ENCODE measurements at regions of chr4 and their contacts with region 1.

Region 1: GRCh38 chr4:140153718-140154571 is at the start of gene MAML3:
- DNase-seq: peak; percentile 79 to 86 (median 84)
- H3K4me3 ChIP-seq: peak within 1 kb of the TSS; percentile 60 to 91 (median 87)
- H3K4me3 Mint-ChIP-seq: peak within 1 kb of the TSS; percentile 97
- H3K27ac ChIP-seq: peak within 1 kb of the TSS; percentile 88 to 92
- H3K27ac Mint-ChIP-seq: peak within 1 kb of the TSS; percentile 92 to 97 (median 94)
- H3K4me1 ChIP-seq: peaks cover 40 to 50% of the 10 kb centered on the region in 2 donors
- H3K4me1 Mint-ChIP-seq: peaks cover 38% of the 10 kb centered on the region
- H3K27me3 ChIP-seq: no peaks in the 10 kb centered on the region
- H3K27me3 Mint-ChIP-seq: peaks cover 0 to 1% (median 0%) of the 10 kb centered on the region in 3 donors
- CTCF ChIP-seq: no peak
- polyA plus RNA-seq, gene MAML3: 1.5 to 6.5 (median 2.3) TPM

Region 2: GRCh38 chr4:139501927-139502899 is 651.7 kb before region 1 on chr4:
- intact Hi-C with region 1: no loop called
- DNase-seq: no peak
- H3K4me3 ChIP-seq: no peak overlapping the region
- H3K4me3 Mint-ChIP-seq: peak overlapping the region in 1 of 2 donors; percentile 6
- H3K27ac ChIP-seq: no peak overlapping the region
- H3K27ac Mint-ChIP-seq: peak overlapping the region in 5 of 7 donors; percentile 9 to 53 (median 28)
- H3K4me1 ChIP-seq: peaks cover 5% of the 10 kb centered on the region in 2 donors
- H3K4me1 Mint-ChIP-seq: peaks cover 29% of the 10 kb centered on the region
- H3K27me3 ChIP-seq: no peaks in the 10 kb centered on the region
- H3K27me3 Mint-ChIP-seq: peaks cover 0 to 1% (median 0%) of the 10 kb centered on the region in 3 donors
- CTCF ChIP-seq: no peak

Region 3: GRCh38 chr4:139734875-139735380 is 419.0 kb before region 1 on chr4:
- intact Hi-C with region 1: loop called (anchors 5 kb)
- DNase-seq: peak; percentile 74 to 97 (median 78)
- H3K4me3 ChIP-seq: peak overlapping the region; percentile 53 to 81 (median 73)
- H3K4me3 Mint-ChIP-seq: peak overlapping the region; percentile 85 to 92
- H3K27ac ChIP-seq: peak overlapping the region; percentile 34 to 79
- H3K27ac Mint-ChIP-seq: peak overlapping the region; percentile 48 to 94 (median 90)
- H3K4me1 ChIP-seq: peaks cover 40 to 57% of the 10 kb centered on the region in 2 donors
- H3K4me1 Mint-ChIP-seq: peaks cover 51% of the 10 kb centered on the region
- H3K27me3 ChIP-seq: no peaks in the 10 kb centered on the region
- H3K27me3 Mint-ChIP-seq: peaks cover 0 to 1% (median 1%) of the 10 kb centered on the region in 3 donors
- CTCF ChIP-seq: peak; percentile 95

Region 4: DNA sequence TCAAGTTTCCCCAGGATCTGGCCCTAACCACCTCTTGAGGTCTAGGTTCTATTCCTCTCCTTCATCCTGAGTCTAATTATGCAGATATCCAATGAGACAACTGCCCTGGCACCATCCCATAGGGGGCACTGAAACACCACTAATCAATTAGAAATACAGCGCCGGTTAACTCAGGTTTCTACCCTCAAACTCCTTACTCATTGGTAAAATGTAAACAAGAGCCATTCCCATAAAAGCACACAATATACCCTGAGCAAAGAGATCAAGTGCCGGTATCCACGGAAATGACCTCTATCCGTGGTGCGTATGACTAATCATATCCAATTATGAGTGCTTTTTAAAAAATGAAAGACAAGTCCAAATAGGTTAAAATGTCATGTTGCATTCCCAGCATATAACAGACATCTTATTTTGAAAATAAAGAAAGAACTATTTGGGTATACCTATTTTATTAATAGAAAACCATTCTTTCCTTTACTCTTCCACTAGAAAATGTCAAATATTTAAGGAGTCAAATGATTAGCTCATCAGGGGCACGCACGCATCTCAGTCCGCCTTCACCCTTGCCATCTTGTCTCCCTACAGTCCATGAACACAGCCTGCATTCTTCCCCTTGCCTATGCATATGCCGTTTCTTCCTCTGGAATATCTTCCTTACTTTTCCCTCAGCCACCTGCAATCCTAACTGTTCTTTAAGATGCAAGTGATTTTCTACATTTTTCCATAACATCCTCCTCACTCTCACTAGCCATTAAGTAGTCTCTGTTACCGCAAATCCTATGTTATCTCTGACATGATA is 141.1 kb before region 1 on chr4:
- intact Hi-C with region 1: loop called in 1 of 2 experiments (anchors 5 kb)
- DNase-seq: peak; percentile 37 to 66 (median 63)
- H3K4me3 ChIP-seq: no peak overlapping the region
- H3K4me3 Mint-ChIP-seq: peak overlapping the region in 1 of 2 donors; percentile 35
- H3K27ac ChIP-seq: no peak overlapping the region
- H3K27ac Mint-ChIP-seq: peak overlapping the region in 1 of 7 donors; percentile 39
- H3K4me1 ChIP-seq: peaks cover 6 to 8% of the 10 kb centered on the region in 2 donors
- H3K4me1 Mint-ChIP-seq: peaks cover 9% of the 10 kb centered on the region
- H3K27me3 ChIP-seq: no peaks in the 10 kb centered on the region
- H3K27me3 Mint-ChIP-seq: no peaks in the 10 kb centered on the region
- CTCF ChIP-seq: peak; percentile 72

Region 5: GRCh38 chr4:140052050-140052449 is 101.9 kb before region 1 on chr4:
- intact Hi-C with region 1: loop called in 1 of 2 experiments (anchors 5 kb)
- DNase-seq: peak in 1 of 3 donors; percentile 49
- H3K4me3 ChIP-seq: no peak overlapping the region
- H3K4me3 Mint-ChIP-seq: no peak overlapping the region
- H3K27ac ChIP-seq: no peak overlapping the region
- H3K27ac Mint-ChIP-seq: no peak overlapping the region
- H3K4me1 ChIP-seq: peaks cover 49 to 70% of the 10 kb centered on the region in 2 donors
- H3K4me1 Mint-ChIP-seq: peaks cover 66% of the 10 kb centered on the region
- H3K27me3 ChIP-seq: no peaks in the 10 kb centered on the region
- H3K27me3 Mint-ChIP-seq: no peaks in the 10 kb centered on the region
- CTCF ChIP-seq: peak; percentile 53

Region 6: GRCh38 chr4:140090215-140090731 is 63.7 kb before region 1 on chr4:
- intact Hi-C with region 1: loop called (anchors 2 to 5 kb)
- DNase-seq: no peak
- H3K4me3 ChIP-seq: no peak overlapping the region
- H3K4me3 Mint-ChIP-seq: peak overlapping the region in 1 of 2 donors; percentile 6
- H3K27ac ChIP-seq: peak overlapping the region in 1 of 2 donors; percentile 82
- H3K27ac Mint-ChIP-seq: peak overlapping the region; percentile 85 to 97 (median 93)
- H3K4me1 ChIP-seq: peaks cover 62 to 67% of the 10 kb centered on the region in 2 donors
- H3K4me1 Mint-ChIP-seq: peaks cover 61% of the 10 kb centered on the region
- H3K27me3 ChIP-seq: no peaks in the 10 kb centered on the region
- H3K27me3 Mint-ChIP-seq: no peaks in the 10 kb centered on the region
- CTCF ChIP-seq: no peak

Region 7: DNA sequence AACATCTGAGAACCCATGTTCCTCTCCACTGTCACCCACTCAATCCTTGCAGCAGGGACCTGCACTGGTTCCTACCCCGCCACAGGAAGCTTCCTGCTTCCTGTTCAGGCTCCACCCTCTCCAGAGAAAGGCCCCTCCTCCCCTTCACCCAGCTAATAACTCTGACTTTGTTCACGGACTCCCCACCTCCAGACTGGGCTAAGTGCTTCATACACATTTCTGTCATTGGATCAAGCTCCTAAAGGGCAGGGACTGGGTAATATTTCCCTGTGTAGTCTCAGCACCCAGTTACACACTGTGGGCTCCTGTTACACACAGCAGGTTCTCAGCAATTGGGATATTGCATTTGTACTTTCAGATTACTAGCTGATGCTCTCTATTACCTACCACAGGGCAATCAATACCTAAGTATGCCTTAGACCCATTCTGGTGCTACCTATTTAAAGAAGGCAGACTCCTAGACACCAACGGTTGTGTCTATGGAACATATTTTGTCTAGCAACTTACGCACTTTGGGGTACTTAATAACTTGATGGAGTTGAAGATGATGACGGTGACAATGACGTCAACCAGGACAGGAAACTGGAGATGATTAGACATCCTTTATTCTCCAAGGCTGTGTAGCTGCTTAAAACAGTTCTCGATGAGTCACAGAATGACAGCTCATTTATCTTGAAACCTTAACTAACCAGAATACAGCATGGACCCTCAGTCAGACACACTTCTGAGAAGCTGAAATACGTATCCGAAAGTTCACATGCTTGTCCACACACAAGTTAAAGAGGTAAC is 58.1 kb before region 1 on chr4:
- intact Hi-C with region 1: loop called (anchors 2 to 5 kb)
- DNase-seq: peak; percentile 93 to 98 (median 98)
- H3K4me3 ChIP-seq: peak overlapping the region; percentile 29 to 68 (median 30)
- H3K4me3 Mint-ChIP-seq: peak overlapping the region; percentile 75 to 85
- H3K27ac ChIP-seq: peak overlapping the region; percentile 96 to 97
- H3K27ac Mint-ChIP-seq: peak overlapping the region; percentile 92 to 99 (median 98)
- H3K4me1 ChIP-seq: peaks cover 99 to 100% of the 10 kb centered on the region in 2 donors
- H3K4me1 Mint-ChIP-seq: peaks cover 99% of the 10 kb centered on the region
- H3K27me3 ChIP-seq: no peaks in the 10 kb centered on the region
- H3K27me3 Mint-ChIP-seq: no peaks in the 10 kb centered on the region
- CTCF ChIP-seq: no peak